ENCODE measurements at regions of chr5 and their contacts with region 1.

Region 1: DNA sequence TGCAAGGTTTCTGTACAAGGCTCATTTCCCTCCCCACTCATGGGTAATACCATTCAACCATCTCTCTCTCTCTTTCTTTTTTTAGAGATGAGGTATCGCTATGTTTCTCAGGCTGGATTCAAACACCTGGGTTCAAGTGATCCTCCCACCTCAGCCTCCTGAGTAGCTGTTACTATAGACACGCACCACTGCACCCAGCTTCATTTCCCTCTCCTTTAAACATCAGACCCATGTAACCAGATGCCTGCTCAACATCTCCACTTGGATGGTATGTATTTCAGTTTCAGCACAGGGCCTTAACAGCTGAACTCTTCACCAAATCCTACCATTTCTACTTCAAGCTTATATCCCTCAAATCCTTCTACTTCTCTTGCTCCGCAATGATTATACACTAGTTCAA is 117.4 kb downstream of the SSBP2 start:
- DNase-seq: no peak
- H3K4me3 ChIP-seq: no peak overlapping the region
- H3K27ac ChIP-seq: no peak overlapping the region
- H3K4me1 ChIP-seq: no peaks in the 10 kb centered on the region
- H3K27me3 ChIP-seq: no peaks in the 10 kb centered on the region
- CTCF ChIP-seq: no peak

Region 2: GRCh38 chr5:81665795-81666194 is 32.3 kb after region 1 on chr5:
- CTCF ChIA-PET with region 1: no interaction called
- POLR2A ChIA-PET with region 1: interaction called, 18 read pairs
- intact Hi-C with region 1: no loop called
- DNase-seq: no peak
- H3K4me3 ChIP-seq: no peak overlapping the region
- H3K27ac ChIP-seq: no peak overlapping the region
- H3K4me1 ChIP-seq: no peaks in the 10 kb centered on the region
- H3K27me3 ChIP-seq: no peaks in the 10 kb centered on the region
- CTCF ChIP-seq: no peak

Measured in PC-9 (cell line).